ENCODE measurements at regions of chr6 and their contacts with region 1.

Region 1: DNA sequence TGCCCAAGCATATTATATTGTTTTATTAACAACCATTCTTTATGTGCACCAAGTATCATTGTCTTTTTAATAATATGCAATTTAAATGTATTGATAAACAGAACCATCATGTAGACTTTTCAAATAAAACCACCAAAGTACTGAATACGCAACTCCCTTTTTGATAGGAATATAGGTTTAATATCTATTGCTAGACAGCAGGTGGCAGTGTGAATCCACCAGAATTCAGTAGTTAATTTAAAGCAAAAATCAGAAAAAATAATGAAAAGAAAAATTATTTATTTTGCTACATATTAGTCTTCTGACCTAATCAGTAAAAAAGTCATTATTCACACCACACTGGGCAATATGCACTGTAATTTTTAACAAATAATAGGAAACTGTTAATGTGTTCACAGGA is 143.7 kb downstream of the KLHL32 start:
- DNase-seq: peak; percentile 47
- H3K4me3 ChIP-seq: no peak overlapping the region
- H3K27ac ChIP-seq: no peak overlapping the region
- H3K4me1 ChIP-seq: no peaks in the 10 kb centered on the region
- H3K27me3 ChIP-seq: peaks cover 8 to 25% of the 10 kb centered on the region in 2 experiments
- CTCF ChIP-seq: peak; percentile 14 to 19
- POLR2A ChIP-seq: no peak

Region 2: DNA sequence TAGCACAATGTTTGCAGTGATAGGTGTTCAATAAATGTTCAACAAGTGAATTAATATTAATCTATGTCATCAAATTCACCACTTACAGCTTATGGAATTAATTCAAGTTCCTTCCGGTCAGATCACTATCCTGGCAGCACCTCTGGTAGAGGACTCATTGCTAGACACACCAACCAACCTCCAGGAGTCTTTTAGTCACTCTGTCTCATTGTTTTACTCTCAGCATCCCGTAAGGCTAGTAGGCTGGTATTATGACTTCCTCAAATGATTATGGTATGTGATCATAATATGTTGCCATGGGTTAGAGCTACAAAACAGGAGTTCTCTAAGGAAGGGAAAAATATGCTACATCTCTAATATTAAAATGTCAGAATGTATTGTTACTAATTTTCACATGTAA is 236.5 kb after region 1 on chr6:
- CTCF ChIA-PET with region 1: no interaction called
- POLR2A ChIA-PET with region 1: no interaction called
- dilution Hi-C with region 1: no loop called
- intact Hi-C with region 1: no loop called
- DNase-seq: no peak
- H3K4me3 ChIP-seq: no peak overlapping the region
- H3K27ac ChIP-seq: no peak overlapping the region
- H3K4me1 ChIP-seq: no peaks in the 10 kb centered on the region
- H3K27me3 ChIP-seq: peaks cover 7 to 14% of the 10 kb centered on the region in 2 experiments
- CTCF ChIP-seq: no peak
- POLR2A ChIP-seq: no peak

Region 3: GRCh38 chr6:97394160-97394748 is 326.0 kb after region 1 on chr6:
- CTCF ChIA-PET with region 1: no interaction called
- POLR2A ChIA-PET with region 1: no interaction called
- dilution Hi-C with region 1: no loop called
- intact Hi-C with region 1: loop called (anchors 1 kb)
- DNase-seq: peak; percentile 75
- H3K4me3 ChIP-seq: no peak overlapping the region
- H3K27ac ChIP-seq: no peak overlapping the region
- H3K4me1 ChIP-seq: no peaks in the 10 kb centered on the region
- H3K27me3 ChIP-seq: peaks cover 4 to 5% of the 10 kb centered on the region in 2 experiments
- CTCF ChIP-seq: peak; percentile 71 to 73
- POLR2A ChIP-seq: no peak

Region 4: GRCh38 chr6:97437087-97437486 is 368.9 kb after region 1 on chr6:
- CTCF ChIA-PET with region 1: interaction called, 4 read pairs
- POLR2A ChIA-PET with region 1: no interaction called
- dilution Hi-C with region 1: no loop called
- intact Hi-C with region 1: loop called (anchors 2 kb)
- DNase-seq: peak; percentile 34
- H3K4me3 ChIP-seq: no peak overlapping the region
- H3K27ac ChIP-seq: no peak overlapping the region
- H3K4me1 ChIP-seq: no peaks in the 10 kb centered on the region
- H3K27me3 ChIP-seq: peaks cover 4 to 16% of the 10 kb centered on the region in 2 experiments
- CTCF ChIP-seq: peak; percentile 64 to 69
- POLR2A ChIP-seq: no peak

Region 5: DNA sequence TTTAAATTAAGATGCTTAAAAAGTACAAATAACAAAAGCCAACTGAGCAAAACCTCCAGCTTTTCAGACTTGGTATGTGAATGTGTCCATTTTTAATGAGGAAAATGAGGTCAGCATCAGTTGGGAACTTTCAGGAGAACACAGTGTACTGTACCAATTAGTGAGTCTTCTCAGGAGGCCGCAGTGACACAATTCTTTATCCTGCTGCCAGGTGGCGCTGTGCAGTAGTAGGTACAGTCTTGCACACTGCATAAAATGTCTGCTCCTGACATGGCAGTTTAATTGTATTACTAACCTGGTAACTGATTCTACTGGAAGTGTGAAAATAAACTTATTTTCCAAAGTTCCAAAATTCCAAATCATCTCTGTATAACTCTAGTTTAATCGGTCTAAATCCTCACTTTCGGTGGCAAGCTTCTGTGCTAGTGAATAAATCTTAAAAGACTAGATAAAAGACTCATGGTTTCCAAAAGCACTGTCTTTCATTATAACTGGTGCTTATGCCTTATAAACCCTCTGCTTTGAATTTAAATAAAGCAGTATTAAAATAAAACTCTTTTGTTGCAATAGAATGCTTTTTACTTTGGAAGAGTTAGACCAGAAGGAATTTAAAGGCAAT is 429.6 kb after region 1 on chr6:
- CTCF ChIA-PET with region 1: no interaction called
- POLR2A ChIA-PET with region 1: no interaction called
- dilution Hi-C with region 1: no loop called
- intact Hi-C with region 1: loop called (anchors 5 kb)
- DNase-seq: peak; percentile 63
- H3K4me3 ChIP-seq: no peak overlapping the region
- H3K27ac ChIP-seq: no peak overlapping the region
- H3K4me1 ChIP-seq: no peaks in the 10 kb centered on the region
- H3K27me3 ChIP-seq: no peaks in the 10 kb centered on the region
- CTCF ChIP-seq: peak; percentile 72 to 86
- POLR2A ChIP-seq: no peak

Measured in endothelial cell of umbilical vein (primary cell).